ENCODE measurements at regions of chr10 and their contacts with region 1.

Region 1: GRCh38 chr10:101272229-101272868 is 43.1 kb upstream of the LBX1 start:
- DNase-seq: peak; percentile 73
- H3K4me3 Mint-ChIP-seq: no peak overlapping the region
- H3K27ac Mint-ChIP-seq: no peak overlapping the region
- H3K4me1 Mint-ChIP-seq: no peaks in the 10 kb centered on the region
- H3K27me3 Mint-ChIP-seq: peaks cover 15% of the 10 kb centered on the region

Region 2: GRCh38 chr10:101238732-101239105 is 33.6 kb before region 1 on chr10:
- CTCF ChIA-PET with region 1: interaction called, 11 read pairs
- POLR2A ChIA-PET with region 1: no interaction called
- intact Hi-C with region 1: no loop called
- DNase-seq: peak; percentile 43
- H3K4me3 Mint-ChIP-seq: no peak overlapping the region
- H3K27ac Mint-ChIP-seq: no peak overlapping the region
- H3K4me1 Mint-ChIP-seq: peaks cover 14% of the 10 kb centered on the region
- H3K27me3 Mint-ChIP-seq: peaks cover 62% of the 10 kb centered on the region

Region 3: GRCh38 chr10:101291331-101292193 is 19.2 kb after region 1 on chr10:
- CTCF ChIA-PET with region 1: interaction called, 22 read pairs
- POLR2A ChIA-PET with region 1: no interaction called
- intact Hi-C with region 1: no loop called
- DNase-seq: peak; percentile 58
- H3K4me3 Mint-ChIP-seq: peak overlapping the region; percentile 66
- H3K27ac Mint-ChIP-seq: no peak overlapping the region
- H3K4me1 Mint-ChIP-seq: peaks cover 5% of the 10 kb centered on the region
- H3K27me3 Mint-ChIP-seq: peaks cover 65% of the 10 kb centered on the region